ENCODE measurements at regions of chr4 and their contacts with region 1.

Region 1: GRCh38 chr4:142416711-142417275 is 429.3 kb downstream of the INPP4B start:
- DNase-seq: no peak
- ATAC-seq: peak; percentile 86
- H3K4me3 ChIP-seq: no peak overlapping the region
- H3K27ac ChIP-seq: no peak overlapping the region
- H3K4me1 ChIP-seq: no peaks in the 10 kb centered on the region
- H3K27me3 ChIP-seq: no peaks in the 10 kb centered on the region; a peak in 1 of 4 replicates
- CTCF ChIP-seq: no peak
- EP300 ChIP-seq: no peak
- POLR2A ChIP-seq: no peak
- RAD21 ChIP-seq: no peak

Region 2: DNA sequence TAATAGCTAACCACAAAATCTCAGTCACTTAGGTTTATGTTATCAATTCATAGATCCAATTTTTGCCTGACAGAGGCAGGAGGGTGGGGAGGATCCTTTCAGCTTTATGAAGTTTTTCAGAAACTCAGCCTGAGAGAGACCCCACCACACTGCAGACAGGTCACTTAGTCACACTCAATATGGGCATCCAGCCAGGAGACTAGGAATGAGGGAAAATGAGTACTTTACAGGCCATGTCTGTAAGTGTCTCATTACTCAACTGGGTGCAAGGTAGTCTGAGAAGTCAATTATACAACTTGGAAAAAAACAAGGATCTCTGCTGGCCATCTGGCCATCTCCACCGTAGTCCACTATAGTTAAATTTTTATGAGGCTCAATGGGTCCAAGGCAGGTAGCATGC is 63.5 kb after region 1 on chr4:
- CTCF ChIA-PET with region 1: no interaction called
- POLR2A ChIA-PET with region 1: no interaction called
- RAD21 ChIA-PET with region 1: interaction called, 3 read pairs
- SMC1A ChIA-PET with region 1: interaction called, 10 read pairs
- in situ Hi-C with region 1: no loop called
- intact Hi-C with region 1: no loop called
- DNase-seq: no peak
- ATAC-seq: no peak
- H3K4me3 ChIP-seq: no peak overlapping the region
- H3K27ac ChIP-seq: no peak overlapping the region
- H3K4me1 ChIP-seq: no peaks in the 10 kb centered on the region
- H3K27me3 ChIP-seq: no peaks in the 10 kb centered on the region
- CTCF ChIP-seq: no peak
- EP300 ChIP-seq: no peak
- POLR2A ChIP-seq: no peak
- RAD21 ChIP-seq: no peak

Region 3: DNA sequence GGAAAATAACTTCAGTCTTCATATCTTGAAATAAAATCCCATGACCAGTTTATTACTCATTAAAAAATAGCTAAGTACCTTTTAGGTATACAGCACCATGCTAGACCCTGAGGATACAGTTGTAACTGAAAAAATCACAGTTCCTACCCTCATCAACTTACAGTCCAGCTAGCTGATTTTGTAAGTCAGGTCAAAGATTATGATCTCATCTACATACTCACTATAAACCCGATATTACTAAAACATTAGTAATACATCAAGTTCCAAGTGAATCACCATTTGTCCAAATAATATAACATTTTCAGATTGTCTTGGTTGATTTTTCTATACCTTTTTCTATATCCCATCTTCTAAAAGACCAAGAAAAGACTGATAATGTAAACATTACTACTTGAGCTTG is 95.4 kb after region 1 on chr4:
- CTCF ChIA-PET with region 1: no interaction called
- POLR2A ChIA-PET with region 1: interaction called, 3 read pairs
- RAD21 ChIA-PET with region 1: no interaction called
- SMC1A ChIA-PET with region 1: interaction called, 10 read pairs
- in situ Hi-C with region 1: no loop called
- intact Hi-C with region 1: no loop called
- DNase-seq: no peak
- ATAC-seq: no peak
- H3K4me3 ChIP-seq: no peak overlapping the region
- H3K27ac ChIP-seq: no peak overlapping the region
- H3K4me1 ChIP-seq: no peaks in the 10 kb centered on the region
- H3K27me3 ChIP-seq: no peaks in the 10 kb centered on the region
- CTCF ChIP-seq: no peak
- EP300 ChIP-seq: no peak
- POLR2A ChIP-seq: no peak
- RAD21 ChIP-seq: no peak